ENCODE measurements at regions of chr16 and their contacts with region 1.

Region 1: GRCh38 chr16:71883849-71884638 is at the start of gene ZNF821:
- DNase-seq: peak; percentile 72
- H3K4me3 ChIP-seq: peak within 1 kb of the TSS; percentile 88 to 98 (median 94)
- H3K27ac ChIP-seq: peak within 1 kb of the TSS; percentile 93 to 97
- H3K4me1 ChIP-seq: peaks cover 0 to 8% of the 10 kb centered on the region in 2 donors
- H3K27me3 ChIP-seq: no peaks in the 10 kb centered on the region
- CTCF ChIP-seq: peak in 1 of 3 donors; percentile 44
- POLR2A ChIP-seq: no peak
- total RNA-seq, gene ZNF821: 3.7 to 11.1 (median 9.8) TPM

Region 2: DNA sequence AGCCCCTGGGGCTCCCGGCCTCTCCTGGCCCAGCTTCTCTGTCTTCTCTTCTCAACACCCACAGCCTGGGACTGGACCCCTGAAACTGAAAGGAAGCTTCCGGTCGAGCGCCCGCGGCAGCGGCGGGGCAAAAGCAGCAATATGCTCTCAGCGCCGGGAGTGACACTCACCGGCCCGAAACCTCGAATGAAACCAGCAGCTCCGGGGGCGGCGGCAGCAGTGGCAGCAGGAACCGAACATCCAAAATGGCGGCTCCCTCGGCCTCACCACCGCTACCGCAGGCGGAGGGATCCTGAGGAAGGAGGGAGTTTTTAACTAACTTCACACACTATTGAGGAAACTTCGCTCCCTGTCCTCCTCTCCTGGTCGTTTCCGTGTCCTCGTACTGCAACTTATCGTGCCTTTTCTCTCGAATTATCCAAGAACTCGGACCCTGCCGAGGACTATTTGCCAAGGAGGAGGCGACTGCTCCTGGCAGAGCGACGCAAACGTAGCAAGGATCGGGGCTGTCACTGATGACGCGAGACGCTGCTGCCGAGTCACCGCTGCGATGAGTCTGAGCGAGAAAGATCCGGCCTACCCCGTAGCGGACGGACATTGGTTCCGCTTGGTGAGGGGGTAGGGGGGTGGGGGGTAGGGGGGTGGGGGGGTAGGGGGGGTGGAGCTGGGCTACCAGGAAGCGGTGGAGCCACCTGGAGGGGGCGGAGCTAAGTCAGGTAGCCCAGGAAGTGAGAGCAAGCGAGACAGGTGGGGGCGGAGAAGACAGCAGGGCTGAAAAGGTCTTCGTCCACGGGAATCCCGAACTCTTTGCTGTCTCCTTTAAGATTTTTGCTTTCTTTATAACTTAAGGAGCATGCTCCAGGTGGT is 75.2 kb before region 1 on chr16 and contains the start of gene AP1G1:
- intact Hi-C with region 1: loop called (anchors 5 kb)
- DNase-seq: peak; percentile 94 to 97
- H3K4me3 ChIP-seq: peak within 1 kb of the TSS; percentile 72 to 98 (median 91)
- H3K27ac ChIP-seq: peak within 1 kb of the TSS; percentile 98 to 99
- H3K4me1 ChIP-seq: peaks cover 4 to 5% of the 10 kb centered on the region in 2 donors
- H3K27me3 ChIP-seq: no peaks in the 10 kb centered on the region
- CTCF ChIP-seq: no peak
- POLR2A ChIP-seq: peak; percentile 66
- total RNA-seq, gene AP1G1: 65.8 to 121 (median 95.7) TPM

Region 3: GRCh38 chr16:71894921-71895678 is 11.1 kb after region 1 on chr16 and contains the start of gene IST1:
- intact Hi-C with region 1: no loop called
- DNase-seq: peak; percentile 97 to 99
- H3K4me3 ChIP-seq: peak within 1 kb of the TSS; percentile 69 to 100 (median 88)
- H3K27ac ChIP-seq: peak within 1 kb of the TSS; percentile 99 to 100
- H3K4me1 ChIP-seq: peaks cover 0 to 7% of the 10 kb centered on the region in 2 donors
- H3K27me3 ChIP-seq: no peaks in the 10 kb centered on the region
- CTCF ChIP-seq: peak in 1 of 3 donors; percentile 10
- POLR2A ChIP-seq: peak; percentile 79
- total RNA-seq, gene IST1: 217 to 303 (median 253) TPM

Region 4: GRCh38 chr16:71961066-71962039 is 77.3 kb after region 1 on chr16:
- intact Hi-C with region 1: loop called (anchors 2 kb)
- DNase-seq: peak; percentile 84 to 87
- H3K4me3 ChIP-seq: no peak overlapping the region
- H3K27ac ChIP-seq: no peak overlapping the region
- H3K4me1 ChIP-seq: no peaks in the 10 kb centered on the region
- H3K27me3 ChIP-seq: no peaks in the 10 kb centered on the region
- CTCF ChIP-seq: peak; percentile 46 to 80 (median 76)
- POLR2A ChIP-seq: no peak